ENCODE measurements at regions of chr17 and their contacts with region 1.

Region 1: DNA sequence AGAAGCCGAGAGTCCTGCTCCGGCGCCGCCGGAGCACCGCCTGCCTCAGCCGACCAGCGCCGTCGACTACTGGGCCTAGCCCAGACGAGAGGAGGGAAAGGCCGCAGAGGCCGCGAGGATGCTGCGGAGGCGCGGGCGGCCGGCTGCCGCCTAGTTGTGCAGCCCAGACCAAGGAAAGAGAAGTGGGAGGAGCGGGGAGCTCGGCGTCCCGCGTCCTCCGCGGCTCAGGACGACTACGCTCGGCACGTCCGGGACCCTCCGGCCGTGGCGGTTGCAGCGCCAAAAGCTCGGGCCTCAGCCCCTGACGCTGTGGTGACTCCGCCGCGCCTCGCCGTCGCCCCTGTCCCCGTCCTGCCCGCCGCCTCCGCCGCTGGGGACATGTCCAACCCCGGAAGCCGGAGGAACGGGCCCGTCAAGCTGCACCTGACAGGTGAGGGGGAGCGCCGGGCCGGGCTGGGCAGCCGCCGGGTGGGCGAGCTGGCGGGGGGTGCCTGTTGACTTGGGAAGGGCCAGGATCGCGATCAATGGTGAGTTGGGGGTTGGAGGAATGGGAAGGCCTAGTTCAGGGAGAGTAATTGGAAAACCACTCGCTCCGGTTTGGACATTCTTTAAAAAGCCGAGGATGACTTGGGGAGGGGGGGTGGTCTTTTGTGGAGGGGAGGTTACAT is 37.7 kb downstream of the RNF135 start:
- DNase-seq: peak; percentile 61
- H3K4me3 Mint-ChIP-seq: peak overlapping the region; percentile 89
- H3K27ac Mint-ChIP-seq: peak overlapping the region; percentile 98
- H3K4me1 Mint-ChIP-seq: peaks cover 16% of the 10 kb centered on the region
- H3K27me3 Mint-ChIP-seq: no peaks in the 10 kb centered on the region
- CTCF ChIP-seq: no peak

Region 2: GRCh38 chr17:30906101-30906911 is 102.2 kb before region 1 on chr17 and contains the start of gene TEFM:
- CTCF ChIA-PET with region 1: no interaction called
- POLR2A ChIA-PET with region 1: interaction called, 20 read pairs
- intact Hi-C with region 1: loop called (anchors 2 kb)
- DNase-seq: peak; percentile 90
- H3K4me3 Mint-ChIP-seq: peak within 1 kb of the TSS; percentile 95
- H3K27ac Mint-ChIP-seq: peak within 1 kb of the TSS; percentile 98
- H3K4me1 Mint-ChIP-seq: peaks cover 19% of the 10 kb centered on the region
- H3K27me3 Mint-ChIP-seq: no peaks in the 10 kb centered on the region
- CTCF ChIP-seq: no peak
- total RNA-seq, gene TEFM: 10.7 and 13.8 TPM in 2 replicates

Region 3: GRCh38 chr17:30950669-30951399 is 57.7 kb before region 1 on chr17:
- CTCF ChIA-PET with region 1: no interaction called
- POLR2A ChIA-PET with region 1: no interaction called
- intact Hi-C with region 1: no loop called
- DNase-seq: peak; percentile 61
- H3K4me3 Mint-ChIP-seq: no peak overlapping the region
- H3K27ac Mint-ChIP-seq: no peak overlapping the region
- H3K4me1 Mint-ChIP-seq: no peaks in the 10 kb centered on the region
- H3K27me3 Mint-ChIP-seq: no peaks in the 10 kb centered on the region
- CTCF ChIP-seq: no peak

Region 4: GRCh38 chr17:30961209-30962188 is 47.0 kb before region 1 on chr17:
- CTCF ChIA-PET with region 1: no interaction called
- POLR2A ChIA-PET with region 1: no interaction called
- intact Hi-C with region 1: no loop called
- DNase-seq: no peak
- H3K4me3 Mint-ChIP-seq: no peak overlapping the region
- H3K27ac Mint-ChIP-seq: no peak overlapping the region
- H3K4me1 Mint-ChIP-seq: no peaks in the 10 kb centered on the region
- H3K27me3 Mint-ChIP-seq: peaks cover 11% of the 10 kb centered on the region
- CTCF ChIP-seq: no peak

Region 5: DNA sequence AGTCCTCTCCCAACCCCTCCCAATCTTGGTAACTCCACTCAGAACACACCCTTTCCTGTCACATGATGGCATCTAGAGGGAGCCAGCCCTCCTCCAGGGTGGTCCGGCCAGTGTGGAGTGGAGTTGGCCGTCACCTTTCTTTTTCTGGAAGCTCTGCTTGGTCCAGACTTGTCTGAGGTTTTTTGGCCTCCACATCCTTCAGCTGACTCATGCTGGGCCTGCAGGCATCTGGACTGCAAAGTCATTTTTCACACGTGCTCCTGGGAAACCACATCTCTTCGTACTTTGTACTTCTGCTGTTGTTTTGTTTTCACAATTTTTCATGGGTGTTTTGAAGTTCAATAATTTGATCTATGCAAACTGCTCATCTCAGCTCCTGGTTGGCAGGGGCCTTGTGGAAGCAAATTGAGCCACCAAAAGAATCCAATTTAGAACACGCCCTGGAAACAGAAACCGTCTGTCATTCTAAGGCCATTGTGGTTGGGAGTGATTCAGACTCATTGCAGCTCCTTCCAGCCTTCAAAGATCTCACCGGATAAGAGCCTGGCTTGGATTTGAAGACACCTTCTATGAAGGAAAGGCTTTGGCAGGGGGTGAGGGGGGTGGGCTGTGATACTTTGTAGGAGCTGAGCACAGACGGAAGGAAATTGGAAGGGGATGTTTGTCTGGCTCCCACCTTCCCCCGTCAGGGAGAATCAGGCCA is 43.8 kb after region 1 on chr17:
- CTCF ChIA-PET with region 1: interaction called, 8 read pairs
- POLR2A ChIA-PET with region 1: interaction called, 14 read pairs
- intact Hi-C with region 1: no loop called
- DNase-seq: peak; percentile 98
- H3K4me3 Mint-ChIP-seq: peak overlapping the region; percentile 65
- H3K27ac Mint-ChIP-seq: peak overlapping the region; percentile 90
- H3K4me1 Mint-ChIP-seq: peaks cover 20% of the 10 kb centered on the region
- H3K27me3 Mint-ChIP-seq: no peaks in the 10 kb centered on the region
- CTCF ChIP-seq: no peak

Region 6: DNA sequence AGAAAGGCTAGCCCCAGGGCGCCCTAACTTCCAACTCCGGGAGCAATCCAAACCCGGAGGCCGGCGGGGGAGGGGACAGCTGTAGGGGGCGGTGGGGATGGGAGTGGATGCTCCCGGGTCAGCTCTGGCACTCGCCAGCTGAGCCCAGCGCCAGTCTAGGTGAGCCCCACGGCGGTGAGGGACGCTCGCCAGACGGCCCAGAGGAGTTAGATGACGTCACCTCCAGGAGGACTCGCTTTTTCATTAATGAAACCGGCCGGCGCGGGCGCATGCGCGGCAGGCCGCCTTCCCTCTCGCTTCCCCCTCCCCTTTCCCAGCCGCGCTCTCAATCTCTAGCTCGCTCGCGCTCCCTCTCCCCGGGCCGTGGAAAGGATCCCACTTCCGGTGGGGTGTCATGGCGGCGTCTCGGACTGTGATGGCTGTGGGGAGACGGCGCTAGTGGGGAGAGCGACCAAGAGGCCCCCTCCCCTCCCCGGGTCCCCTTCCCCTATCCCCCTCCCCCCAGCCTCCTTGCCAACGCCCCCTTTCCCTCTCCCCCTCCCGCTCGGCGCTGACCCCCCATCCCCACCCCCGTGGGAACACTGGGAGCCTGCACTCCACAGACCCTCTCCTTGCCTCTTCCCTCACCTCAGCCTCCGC is 86.2 kb after region 1 on chr17 and contains the start of gene NF1:
- CTCF ChIA-PET with region 1: interaction called, 9 read pairs
- POLR2A ChIA-PET with region 1: interaction called, 18 read pairs
- intact Hi-C with region 1: no loop called
- DNase-seq: peak; percentile 96
- H3K4me3 Mint-ChIP-seq: peak within 1 kb of the TSS; percentile 91
- H3K27ac Mint-ChIP-seq: peak within 1 kb of the TSS; percentile 87
- H3K4me1 Mint-ChIP-seq: peaks cover 16% of the 10 kb centered on the region
- H3K27me3 Mint-ChIP-seq: no peaks in the 10 kb centered on the region
- CTCF ChIP-seq: no peak
- total RNA-seq, gene NF1: 58.5 and 60.2 TPM in 2 replicates

Region 7: DNA sequence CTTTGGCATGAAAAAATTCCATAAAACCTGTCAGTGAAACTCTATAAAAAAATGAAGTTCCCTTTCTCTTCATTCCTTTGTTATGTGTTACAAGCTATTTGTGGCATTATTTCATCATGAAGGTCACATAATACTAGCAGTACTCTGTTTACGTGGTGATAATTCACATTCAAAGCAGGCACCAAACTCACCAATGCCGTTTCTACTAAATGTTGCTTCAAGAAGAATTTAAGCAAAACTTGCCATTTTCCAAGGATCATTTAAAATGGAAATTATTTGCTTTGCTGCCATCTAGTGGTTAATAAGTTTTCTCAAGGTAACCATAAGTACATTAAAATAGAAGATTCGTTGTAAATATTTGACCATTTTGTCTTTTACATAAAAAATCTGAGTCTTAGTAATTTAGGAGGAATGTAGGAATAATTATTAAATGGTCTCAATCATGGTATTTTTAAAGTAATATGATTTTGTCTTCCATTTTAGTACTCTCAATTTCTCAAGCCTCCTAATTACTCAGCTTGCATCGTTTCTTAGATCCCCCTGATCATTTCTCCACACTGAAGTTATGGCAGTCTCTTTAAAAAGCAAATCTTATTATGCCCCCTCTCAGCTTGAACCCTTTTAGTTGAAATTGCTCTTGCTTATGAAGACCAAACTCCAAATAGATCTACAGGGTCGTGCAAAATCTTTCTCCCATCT is 207.7 kb after region 1 on chr17:
- CTCF ChIA-PET with region 1: interaction called, 39 read pairs
- POLR2A ChIA-PET with region 1: interaction called, 21 read pairs
- intact Hi-C with region 1: loop called (anchors 1 kb)
- DNase-seq: peak; percentile 52
- H3K4me3 Mint-ChIP-seq: no peak overlapping the region
- H3K27ac Mint-ChIP-seq: no peak overlapping the region
- H3K4me1 Mint-ChIP-seq: no peaks in the 10 kb centered on the region
- H3K27me3 Mint-ChIP-seq: no peaks in the 10 kb centered on the region
- CTCF ChIP-seq: peak; percentile 32

Region 8: DNA sequence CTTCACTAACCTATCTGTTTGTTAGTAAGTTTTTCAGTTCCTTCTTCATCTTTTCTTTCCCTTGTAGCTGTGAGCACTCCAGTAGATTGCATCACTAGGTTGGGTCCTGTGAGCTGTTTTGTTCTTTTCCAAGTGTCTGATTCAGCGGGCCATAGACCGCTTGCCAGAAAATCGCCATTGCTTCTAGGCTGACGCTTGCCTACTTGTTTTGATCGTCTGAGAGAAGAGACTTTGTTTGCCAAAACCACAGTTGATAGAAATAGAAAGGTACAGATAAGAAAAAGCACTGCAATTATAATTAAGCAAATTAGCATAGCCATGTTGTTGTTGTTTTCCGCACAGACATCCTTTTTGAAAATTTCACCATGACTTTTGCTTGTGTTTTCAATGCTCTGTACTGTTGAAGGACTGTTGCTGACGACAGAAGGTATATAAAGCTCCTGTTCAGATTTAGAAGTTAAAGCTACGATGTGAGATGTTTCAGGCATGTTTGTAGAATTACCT is 309.8 kb after region 1 on chr17:
- CTCF ChIA-PET with region 1: no interaction called
- POLR2A ChIA-PET with region 1: interaction called, 26 read pairs
- intact Hi-C with region 1: no loop called
- DNase-seq: peak; percentile 92
- H3K4me3 Mint-ChIP-seq: peak overlapping the region; percentile 65
- H3K27ac Mint-ChIP-seq: peak overlapping the region; percentile 90
- H3K4me1 Mint-ChIP-seq: peaks cover 27% of the 10 kb centered on the region
- H3K27me3 Mint-ChIP-seq: no peaks in the 10 kb centered on the region
- CTCF ChIP-seq: no peak

Measured in MCF 10A (cell line).